ENCODE measurements at regions of chr16 and their contacts with region 1.

Region 1: GRCh38 chr16:88561485-88562369 is 8.5 kb upstream of the ZC3H18 start:
- DNase-seq: peak; percentile 58
- ATAC-seq: peak; percentile 69
- H3K4me3 Mint-ChIP-seq: no peak overlapping the region
- H3K27ac Mint-ChIP-seq: no peak overlapping the region
- H3K4me1 Mint-ChIP-seq: peaks cover 13% of the 10 kb centered on the region
- H3K27me3 Mint-ChIP-seq: peaks cover 2% of the 10 kb centered on the region
- CTCF ChIP-seq: peak; percentile 40

Region 2: DNA sequence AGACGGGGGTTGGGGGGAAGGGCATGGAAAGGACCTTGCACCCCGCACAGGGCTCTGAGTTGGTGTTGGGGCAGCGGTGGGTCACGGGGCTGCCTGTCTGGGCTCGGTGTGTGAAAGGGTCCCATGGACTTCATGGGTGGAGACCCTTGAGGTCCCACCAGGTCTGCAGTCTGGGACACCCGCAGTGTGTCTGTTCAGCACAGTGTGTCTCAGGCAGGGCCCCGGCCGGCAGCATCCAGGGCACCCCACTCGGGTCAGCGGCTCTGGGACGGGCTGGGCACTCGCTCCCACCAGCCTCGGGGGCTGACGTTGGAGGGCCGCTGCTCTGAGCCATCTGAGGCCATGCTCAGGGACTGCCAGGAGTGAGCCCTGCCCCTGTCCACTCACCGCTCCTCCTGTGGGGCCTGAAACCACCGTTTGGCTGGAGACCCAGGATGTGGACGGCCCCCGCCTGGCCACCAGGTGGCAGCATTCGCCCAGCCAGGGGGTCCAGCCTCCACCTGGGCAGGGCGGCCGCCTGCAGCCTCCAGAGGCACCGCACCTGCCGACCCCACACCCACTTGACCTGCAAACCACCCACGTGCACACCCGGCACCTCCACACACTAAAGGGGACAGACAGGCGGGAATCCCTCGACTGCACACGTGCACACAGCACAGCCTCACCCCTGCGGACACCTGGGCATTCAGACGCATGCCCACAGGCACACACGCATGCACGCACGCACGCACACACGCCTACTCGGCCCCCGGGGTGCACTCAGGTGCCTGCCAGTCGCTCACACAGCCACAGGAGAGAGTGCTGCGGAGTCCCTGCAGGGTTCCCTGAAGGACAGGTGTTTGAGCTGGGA is 118.8 kb before region 1 on chr16:
- CTCF ChIA-PET with region 1: interaction called, 25 read pairs
- POLR2A ChIA-PET with region 1: interaction called, 3 read pairs
- intact Hi-C with region 1: loop called (anchors 2 kb)
- DNase-seq: peak; percentile 83
- ATAC-seq: peak; percentile 93
- H3K4me3 Mint-ChIP-seq: no peak overlapping the region
- H3K27ac Mint-ChIP-seq: no peak overlapping the region
- H3K4me1 Mint-ChIP-seq: peaks cover 4% of the 10 kb centered on the region
- H3K27me3 Mint-ChIP-seq: no peaks in the 10 kb centered on the region
- CTCF ChIP-seq: peak; percentile 94

Region 3: GRCh38 chr16:88497561-88498462 is 63.9 kb before region 1 on chr16:
- CTCF ChIA-PET with region 1: no interaction called
- POLR2A ChIA-PET with region 1: no interaction called
- intact Hi-C with region 1: no loop called
- DNase-seq: no peak
- ATAC-seq: no peak
- H3K4me3 Mint-ChIP-seq: no peak overlapping the region
- H3K27ac Mint-ChIP-seq: no peak overlapping the region
- H3K4me1 Mint-ChIP-seq: peaks cover 1% of the 10 kb centered on the region
- H3K27me3 Mint-ChIP-seq: no peaks in the 10 kb centered on the region
- CTCF ChIP-seq: no peak

Region 4: DNA sequence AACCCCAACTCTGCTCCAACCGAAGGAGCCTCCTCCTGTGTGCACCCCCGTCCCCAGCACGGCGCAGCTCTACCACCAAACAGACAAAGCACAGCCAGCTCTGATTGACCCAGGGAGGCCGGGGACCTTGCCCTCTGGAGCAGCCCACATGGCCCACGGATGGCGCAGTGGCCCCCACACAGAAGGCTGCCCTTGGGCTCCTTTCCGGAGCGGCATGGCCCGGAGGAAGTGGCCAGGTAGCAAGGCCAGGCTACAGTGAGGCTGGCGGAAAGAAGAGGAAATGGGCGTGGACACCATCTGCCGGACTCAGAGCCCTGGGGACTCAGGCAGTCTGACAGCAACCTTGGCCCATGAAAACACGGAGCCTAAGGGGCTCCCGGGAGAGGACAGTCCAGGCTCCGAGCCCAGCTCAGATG is 11.5 kb before region 1 on chr16:
- CTCF ChIA-PET with region 1: interaction called, 14 read pairs
- POLR2A ChIA-PET with region 1: interaction called, 5 read pairs
- intact Hi-C with region 1: no loop called
- DNase-seq: peak; percentile 63
- ATAC-seq: peak; percentile 91
- H3K4me3 Mint-ChIP-seq: peak overlapping the region; percentile 55
- H3K27ac Mint-ChIP-seq: peak overlapping the region; percentile 89
- H3K4me1 Mint-ChIP-seq: peaks cover 23% of the 10 kb centered on the region
- H3K27me3 Mint-ChIP-seq: no peaks in the 10 kb centered on the region
- CTCF ChIP-seq: no peak

Region 5: DNA sequence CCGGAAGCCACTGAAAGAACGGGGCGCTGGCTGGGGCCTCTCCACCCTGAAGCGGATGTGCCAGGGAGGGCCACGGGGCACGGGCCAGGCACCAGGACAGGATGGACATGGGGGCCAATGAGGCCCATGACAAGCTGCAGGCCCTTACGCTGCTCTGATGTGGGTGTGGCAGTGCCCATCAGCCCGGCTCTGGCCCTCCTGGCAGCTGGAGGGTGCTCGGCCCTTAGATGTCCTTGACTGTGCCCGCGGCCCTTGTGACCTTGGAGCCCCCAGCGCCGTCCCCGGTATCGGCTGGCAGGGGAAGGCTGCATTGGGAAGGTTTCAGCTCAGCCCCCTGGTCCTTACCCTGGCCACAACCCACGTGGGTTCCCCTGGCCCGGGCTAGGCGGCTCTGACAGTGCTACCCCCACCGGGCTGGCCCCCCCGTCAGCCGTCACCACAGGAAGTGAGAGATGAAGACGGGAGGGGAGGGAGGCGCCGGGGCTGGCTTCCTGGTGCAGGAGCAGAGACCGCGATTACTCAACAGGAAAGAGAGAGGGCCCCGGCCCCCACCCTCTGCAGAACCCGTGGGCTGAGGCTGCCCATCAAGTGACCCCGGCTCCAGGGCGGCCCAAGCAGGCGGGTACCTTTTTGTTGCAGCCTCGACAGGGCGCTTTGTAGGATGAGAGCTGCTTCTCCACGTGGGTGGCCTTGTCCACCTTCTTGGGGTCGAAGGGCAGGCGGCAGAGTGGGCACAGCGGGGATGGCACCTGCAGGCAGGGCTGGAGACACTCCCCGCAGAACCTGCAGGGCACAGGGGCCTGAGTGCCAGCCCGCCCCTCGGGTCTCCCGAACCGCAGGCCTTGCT is 139.1 kb after region 1 on chr16:
- CTCF ChIA-PET with region 1: no interaction called
- POLR2A ChIA-PET with region 1: no interaction called
- intact Hi-C with region 1: no loop called
- DNase-seq: peak; percentile 99
- ATAC-seq: peak; percentile 79
- H3K4me3 Mint-ChIP-seq: peak overlapping the region; percentile 94
- H3K27ac Mint-ChIP-seq: peak overlapping the region; percentile 97
- H3K4me1 Mint-ChIP-seq: peaks cover 52% of the 10 kb centered on the region
- H3K27me3 Mint-ChIP-seq: no peaks in the 10 kb centered on the region
- CTCF ChIP-seq: no peak